ENCODE measurements at regions of chr12 and their contacts with region 1.

Region 1: GRCh38 chr12:124352839-124353238 is 57.9 kb downstream of the RFLNA start:
- DNase-seq: peak; percentile 91
- ATAC-seq: peak; percentile 79
- H3K4me3 ChIP-seq: no peak overlapping the region
- H3K27ac ChIP-seq: peak overlapping the region; percentile 62
- H3K4me1 ChIP-seq: peaks cover 20% of the 10 kb centered on the region
- H3K27me3 ChIP-seq: no peaks in the 10 kb centered on the region
- CTCF ChIP-seq: no peak; the same call in 1 of the 2 replicates
- EP300 ChIP-seq: peak; percentile 24 to 63; a peak in 3 of 4 replicates
- POLR2A ChIP-seq: no peak
- RAD21 ChIP-seq: no peak

Region 2: DNA sequence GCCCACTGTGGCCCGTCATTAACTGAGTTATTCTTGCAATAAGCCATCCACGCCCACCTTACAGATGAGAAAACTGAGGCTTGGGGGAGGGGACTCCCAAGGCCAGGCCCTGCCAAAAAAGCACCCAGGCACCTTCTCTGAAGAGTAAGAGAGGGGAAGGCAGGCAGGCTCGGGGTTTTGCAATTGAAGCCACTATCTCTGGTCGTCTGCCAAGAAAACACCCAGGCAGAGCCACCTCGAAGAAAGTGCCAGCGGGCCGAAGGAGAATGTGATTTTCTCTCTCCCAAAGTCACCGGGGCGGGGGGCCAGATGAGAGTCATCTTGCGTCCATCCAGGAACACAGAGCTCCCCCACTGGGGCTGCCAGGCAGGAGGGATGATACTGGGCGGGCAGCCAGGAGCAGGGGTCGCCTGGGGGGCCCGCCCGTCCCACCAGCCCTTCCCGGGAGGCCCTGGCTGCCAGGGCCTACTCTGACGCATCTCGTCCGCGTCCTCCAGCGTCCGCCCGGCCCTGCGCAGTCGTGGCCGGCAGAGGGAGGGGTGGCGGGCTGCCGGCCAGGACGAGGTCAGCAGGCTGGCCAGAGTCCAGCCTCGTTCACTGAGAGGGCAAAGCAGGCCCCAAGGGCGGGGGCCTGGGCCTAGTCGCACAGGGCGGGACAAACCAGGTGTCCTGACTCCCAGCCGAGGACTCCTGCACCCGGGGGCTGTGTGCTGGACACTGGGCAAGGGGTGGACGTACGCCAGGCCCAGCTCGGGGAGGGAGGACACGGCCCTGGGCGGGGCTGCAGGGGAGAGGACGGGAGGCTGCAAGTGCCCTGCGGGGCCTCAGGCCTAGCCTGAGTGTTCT is 16.4 kb after region 1 on chr12:
- CTCF ChIA-PET with region 1: no interaction called
- POLR2A ChIA-PET with region 1: no interaction called
- in situ Hi-C with region 1: no loop called
- intact Hi-C with region 1: loop called (anchors 1 kb)
- DNase-seq: peak; percentile 69
- ATAC-seq: peak; percentile 88
- H3K4me3 ChIP-seq: peak overlapping the region in 1 of 3 experiments; percentile 47; a peak in 1 of 6 replicates
- H3K27ac ChIP-seq: peak overlapping the region; percentile 77
- H3K4me1 ChIP-seq: peaks cover 37% of the 10 kb centered on the region
- H3K27me3 ChIP-seq: no peaks in the 10 kb centered on the region
- CTCF ChIP-seq: peak; percentile 71
- EP300 ChIP-seq: no peak; a peak in 1 of 4 replicates
- POLR2A ChIP-seq: no peak
- RAD21 ChIP-seq: peak; percentile 55

Region 3: DNA sequence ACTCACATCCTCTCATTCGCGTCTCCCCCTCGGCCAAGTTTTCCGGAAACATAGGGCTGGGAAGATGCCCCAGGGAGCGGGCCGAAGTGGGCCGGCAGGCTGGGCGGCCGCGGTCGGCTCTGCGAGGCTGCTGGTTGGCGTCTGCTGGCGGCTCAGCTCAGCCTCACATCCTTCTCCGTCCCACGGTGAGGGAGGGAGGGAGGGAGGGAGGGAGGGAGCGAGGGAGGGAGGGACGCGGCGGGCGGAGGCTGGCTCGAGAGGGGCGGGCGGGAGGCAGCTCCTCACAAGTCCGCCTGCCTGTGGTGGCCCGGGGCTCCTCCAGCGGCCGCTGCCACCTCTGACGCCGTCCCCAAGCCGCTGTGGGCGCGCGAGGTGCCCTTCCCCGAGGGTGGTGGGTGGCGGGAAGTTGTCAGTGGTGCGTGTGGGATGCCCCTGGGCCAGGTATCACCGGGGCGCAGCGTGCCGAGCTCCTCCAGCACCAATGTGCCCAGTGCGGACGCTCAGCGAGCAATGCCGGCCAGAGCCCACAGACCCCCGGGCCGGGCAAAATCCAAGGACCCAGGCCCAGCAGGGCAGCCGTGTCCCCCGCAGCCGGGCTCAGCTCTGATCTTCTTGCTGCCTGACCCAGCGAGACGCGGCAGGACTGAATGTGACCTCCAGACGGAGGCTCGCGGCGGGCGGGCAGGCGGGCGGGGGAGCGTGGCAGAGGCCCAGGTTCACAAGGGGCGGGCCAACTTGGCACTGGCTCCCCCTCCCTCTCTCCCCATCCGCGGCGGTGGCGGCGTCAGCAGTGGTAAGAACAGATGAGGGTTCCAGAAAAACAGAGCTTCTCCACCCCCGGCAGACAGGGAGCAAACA is 36.1 kb after region 1 on chr12:
- CTCF ChIA-PET with region 1: no interaction called
- POLR2A ChIA-PET with region 1: interaction called, 11 read pairs
- in situ Hi-C with region 1: no loop called
- intact Hi-C with region 1: loop called (anchors 2 kb)
- DNase-seq: peak; percentile 79
- ATAC-seq: peak; percentile 76
- H3K4me3 ChIP-seq: peak overlapping the region; percentile 56 to 84 (median 72); a peak in 5 of 6 replicates
- H3K27ac ChIP-seq: peak overlapping the region; percentile 88
- H3K4me1 ChIP-seq: peaks cover 32% of the 10 kb centered on the region
- H3K27me3 ChIP-seq: no peaks in the 10 kb centered on the region
- CTCF ChIP-seq: peak; percentile 13
- EP300 ChIP-seq: no peak
- POLR2A ChIP-seq: peak; percentile 27 to 58; a peak in 3 of 4 replicates
- RAD21 ChIP-seq: peak; percentile 26; the same call in 1 of the 2 replicates